ENCODE measurements at regions of chr6 and their contacts with region 1.

Region 1: GRCh38 chr6:51855310-51856082 is 231.9 kb downstream of the PKHD1 start:
- DNase-seq: no peak
- H3K4me3 Mint-ChIP-seq: no peak overlapping the region
- H3K27ac Mint-ChIP-seq: no peak overlapping the region
- H3K4me1 Mint-ChIP-seq: no peaks in the 10 kb centered on the region
- H3K27me3 Mint-ChIP-seq: peaks cover 12% of the 10 kb centered on the region

Region 2: DNA sequence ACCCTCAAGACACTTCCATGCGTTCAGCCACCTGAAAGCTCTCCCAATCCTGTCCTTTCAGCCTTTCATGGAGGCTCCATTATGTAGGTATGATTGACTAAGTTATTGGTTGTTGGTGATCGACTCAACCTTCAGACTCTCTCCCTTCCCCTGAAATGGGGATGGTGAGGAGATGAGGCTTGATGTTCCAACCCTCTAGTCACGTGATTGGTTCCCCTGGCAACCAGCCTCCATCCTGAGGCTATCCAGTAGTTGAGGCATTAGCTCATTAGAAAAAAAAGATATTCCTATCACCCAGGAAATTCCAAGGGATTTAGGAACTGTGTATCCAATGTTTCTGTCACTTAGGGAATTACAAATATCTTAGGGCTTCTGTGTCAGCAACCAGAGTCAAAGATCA is 194.7 kb before region 1 on chr6:
- CTCF ChIA-PET with region 1: no interaction called
- POLR2A ChIA-PET with region 1: no interaction called
- intact Hi-C with region 1: no loop called
- DNase-seq: no peak
- H3K4me3 Mint-ChIP-seq: no peak overlapping the region
- H3K27ac Mint-ChIP-seq: no peak overlapping the region
- H3K4me1 Mint-ChIP-seq: no peaks in the 10 kb centered on the region
- H3K27me3 Mint-ChIP-seq: no peaks in the 10 kb centered on the region

Region 3: DNA sequence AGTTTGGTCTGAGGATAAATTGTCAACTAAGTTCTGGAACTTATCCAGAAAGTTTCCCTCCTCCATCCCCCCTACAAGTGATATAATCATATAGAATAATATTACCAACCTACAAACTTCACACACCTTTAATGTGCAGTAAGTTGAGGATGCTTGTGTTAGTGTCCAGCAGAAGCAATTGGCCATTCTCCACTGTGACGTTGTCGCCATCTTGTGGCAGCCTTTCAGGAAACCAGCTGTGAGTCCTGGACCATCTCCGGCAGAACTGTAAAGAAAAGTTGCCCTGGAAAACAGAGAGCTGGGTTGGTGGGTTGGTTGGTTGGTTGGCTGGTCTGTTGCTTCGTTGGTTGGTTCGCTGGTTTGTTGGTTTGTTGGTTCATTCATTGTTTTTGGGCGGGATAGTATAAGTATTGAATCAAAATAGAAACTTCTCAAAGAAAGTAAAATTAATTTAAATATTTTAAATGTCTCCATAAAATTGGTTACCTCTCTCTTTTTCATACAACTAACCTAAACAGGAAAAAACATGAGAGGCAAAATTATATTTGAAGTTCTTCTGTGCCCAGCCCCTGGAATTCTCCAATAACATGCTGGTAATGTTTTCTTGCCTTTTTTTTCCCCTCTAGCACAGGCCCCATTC is 104.4 kb after region 1 on chr6:
- CTCF ChIA-PET with region 1: interaction called, 8 read pairs
- POLR2A ChIA-PET with region 1: no interaction called
- intact Hi-C with region 1: loop called (anchors 1 kb)
- DNase-seq: peak; percentile 68
- H3K4me3 Mint-ChIP-seq: no peak overlapping the region
- H3K27ac Mint-ChIP-seq: no peak overlapping the region
- H3K4me1 Mint-ChIP-seq: no peaks in the 10 kb centered on the region
- H3K27me3 Mint-ChIP-seq: peaks cover 1% of the 10 kb centered on the region

Region 4: GRCh38 chr6:52049252-52050050 is 194.0 kb after region 1 on chr6:
- CTCF ChIA-PET with region 1: interaction called, 6 read pairs
- POLR2A ChIA-PET with region 1: no interaction called
- intact Hi-C with region 1: loop called (anchors 1 kb)
- DNase-seq: no peak
- H3K4me3 Mint-ChIP-seq: no peak overlapping the region
- H3K27ac Mint-ChIP-seq: no peak overlapping the region
- H3K4me1 Mint-ChIP-seq: no peaks in the 10 kb centered on the region
- H3K27me3 Mint-ChIP-seq: peaks cover 7% of the 10 kb centered on the region

Measured in activated CD4-positive, alpha-beta memory T cell treated with anti-CD3 and anti-CD28 coated beads for 36 hours (primary cell).